Heart right ventricle (tissue), 16 donors: ENCODE measurements at regions of chr3 and their contacts with region 1.

Region 1: GRCh38 chr3:114152519-114153151 is 26.2 kb downstream of the DRD3 start:
- DNase-seq: peak; percentile 82 to 83
- ATAC-seq: peak; percentile 90 to 96 (median 95)
- H3K4me3 ChIP-seq: peak overlapping the region; percentile 3 to 63 (median 46)
- H3K27ac ChIP-seq: peak overlapping the region in 3 of 10 donors; percentile 3 to 66 (median 7)
- H3K4me1 ChIP-seq: peaks cover 0 to 13% (median 6%) of the 10 kb centered on the region in 9 donors
- H3K27me3 ChIP-seq: no peaks in the 10 kb centered on the region
- CTCF ChIP-seq: peak; percentile 81 to 98 (median 91)

Region 2: GRCh38 chr3:113461488-113461887 is 691.1 kb before region 1 on chr3:
- intact Hi-C with region 1: no loop called
- DNase-seq: no peak
- ATAC-seq: no peak
- H3K4me3 ChIP-seq: no peak overlapping the region
- H3K27ac ChIP-seq: no peak overlapping the region
- H3K4me1 ChIP-seq: no peaks in the 10 kb centered on the region
- H3K27me3 ChIP-seq: no peaks in the 10 kb centered on the region
- CTCF ChIP-seq: no peak

Region 3: GRCh38 chr3:113736548-113737089 is 416.0 kb before region 1 on chr3:
- intact Hi-C with region 1: loop called in 2 of 10 experiments (anchors 10 kb)
- DNase-seq: peak in 1 of 2 donors; percentile 26
- ATAC-seq: peak in 7 of 8 donors; percentile 55 to 83 (median 74)
- H3K4me3 ChIP-seq: no peak overlapping the region
- H3K27ac ChIP-seq: peak overlapping the region in 2 of 10 donors; percentile 0 to 6
- H3K4me1 ChIP-seq: peaks cover 0 to 43% (median 36%) of the 10 kb centered on the region in 9 donors
- H3K27me3 ChIP-seq: no peaks in the 10 kb centered on the region
- CTCF ChIP-seq: peak; percentile 52 to 80 (median 73)

Region 4: DNA sequence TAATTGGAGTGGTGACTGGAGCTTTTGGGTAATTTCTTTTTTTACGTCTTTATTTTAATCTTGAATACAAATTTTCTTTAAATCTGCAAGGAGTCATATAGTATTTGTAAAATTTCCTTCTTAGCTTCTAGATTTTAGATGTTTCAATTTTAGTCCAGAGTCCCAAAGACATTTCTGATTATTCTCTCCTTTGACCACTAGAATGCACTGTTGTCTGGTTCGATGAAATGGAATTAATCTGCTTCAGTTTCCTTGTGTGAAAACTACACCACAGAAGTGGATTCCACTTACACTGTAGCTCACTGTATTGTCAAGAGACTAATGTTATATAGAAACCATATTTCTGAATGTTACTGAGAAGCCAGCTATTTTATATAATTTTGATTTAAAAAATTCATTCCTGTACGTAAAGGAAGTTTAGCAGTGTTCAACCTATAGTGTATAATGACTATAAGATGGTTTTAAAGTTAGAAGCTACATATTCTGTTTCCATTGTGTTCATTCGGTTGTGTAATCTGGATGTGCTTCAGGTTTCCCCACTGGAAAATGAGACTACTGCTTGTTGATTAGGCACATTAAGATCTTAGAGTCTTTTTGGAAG is 307.9 kb before region 1 on chr3:
- intact Hi-C with region 1: loop called in 3 of 10 experiments (anchors 10 kb)
- DNase-seq: no peak
- ATAC-seq: no peak
- H3K4me3 ChIP-seq: no peak overlapping the region
- H3K27ac ChIP-seq: no peak overlapping the region
- H3K4me1 ChIP-seq: peaks cover 0 to 1% (median 0%) of the 10 kb centered on the region in 9 donors
- H3K27me3 ChIP-seq: no peaks in the 10 kb centered on the region
- CTCF ChIP-seq: peak in 7 of 9 donors; percentile 49 to 70 (median 57)

Region 5: GRCh38 chr3:114122027-114122709 is 30.5 kb before region 1 on chr3:
- intact Hi-C with region 1: no loop called
- DNase-seq: peak in 1 of 2 donors; percentile 60
- ATAC-seq: peak; percentile 79 to 97 (median 92)
- H3K4me3 ChIP-seq: no peak overlapping the region
- H3K27ac ChIP-seq: peak overlapping the region; percentile 31 to 83 (median 70)
- H3K4me1 ChIP-seq: peaks cover 0 to 34% (median 6%) of the 10 kb centered on the region in 9 donors
- H3K27me3 ChIP-seq: no peaks in the 10 kb centered on the region
- CTCF ChIP-seq: no peak

Region 6: GRCh38 chr3:114290911-114291901 is 138.6 kb after region 1 on chr3:
- intact Hi-C with region 1: loop called in 5 of 10 experiments (anchors 5 to 10 kb)
- DNase-seq: peak; percentile 34 to 61
- ATAC-seq: peak; percentile 38 to 69 (median 52)
- H3K4me3 ChIP-seq: peak overlapping the region in 1 of 10 donors; percentile 22
- H3K27ac ChIP-seq: peak overlapping the region in 1 of 10 donors; percentile 82
- H3K4me1 ChIP-seq: peaks cover 0 to 9% (median 0%) of the 10 kb centered on the region in 9 donors
- H3K27me3 ChIP-seq: no peaks in the 10 kb centered on the region
- CTCF ChIP-seq: peak; percentile 53 to 92 (median 70)

Region 7: DNA sequence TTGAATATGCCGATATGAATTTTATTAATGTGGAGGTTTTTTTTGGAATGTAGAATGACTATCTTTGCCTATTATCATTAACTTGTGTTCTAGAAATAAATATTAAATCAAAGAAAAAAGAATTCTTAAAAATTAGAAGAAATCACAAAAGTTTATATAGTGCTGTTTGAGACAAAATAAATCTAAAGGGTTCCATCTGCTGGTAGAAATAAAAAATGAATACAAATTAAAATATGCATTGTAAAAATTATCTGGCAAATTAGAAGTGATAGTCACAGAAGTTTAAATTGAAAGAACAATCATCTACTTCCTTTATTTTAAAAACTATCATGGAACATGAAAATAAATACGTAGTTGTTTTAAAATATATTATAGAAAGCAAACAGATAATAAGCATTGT is 1017.2 kb after region 1 on chr3:
- intact Hi-C with region 1: loop called in 1 of 10 experiments (anchors 10 kb)
- DNase-seq: no peak
- ATAC-seq: no peak
- H3K4me3 ChIP-seq: no peak overlapping the region
- H3K27ac ChIP-seq: no peak overlapping the region
- H3K4me1 ChIP-seq: no peaks in the 10 kb centered on the region
- H3K27me3 ChIP-seq: no peaks in the 10 kb centered on the region
- CTCF ChIP-seq: peak in 8 of 9 donors; percentile 34 to 66 (median 49)

Region 8: DNA sequence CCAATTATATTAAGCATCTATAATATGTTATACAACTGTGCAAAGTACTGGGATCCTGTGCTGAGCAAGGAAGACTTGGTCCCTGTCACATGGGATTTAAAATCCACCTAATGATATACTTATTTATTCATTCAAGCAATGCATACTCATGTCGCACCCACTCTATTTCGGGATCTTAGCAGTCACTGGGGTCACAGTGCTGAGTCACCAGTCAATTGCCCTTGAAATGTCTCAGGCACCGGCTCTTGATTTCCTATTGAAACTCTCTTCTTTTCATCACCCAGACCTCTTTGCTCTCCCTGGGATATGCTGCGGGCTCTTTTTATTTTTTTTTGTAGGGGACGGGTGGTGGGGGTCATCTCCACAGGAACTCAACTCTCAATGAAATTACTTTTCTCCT is 1276.2 kb after region 1 on chr3:
- intact Hi-C with region 1: no loop called
- DNase-seq: no peak
- ATAC-seq: peak in 2 of 8 donors; percentile 42 to 80
- H3K4me3 ChIP-seq: no peak overlapping the region
- H3K27ac ChIP-seq: no peak overlapping the region
- H3K4me1 ChIP-seq: peaks cover 0 to 15% (median 0%) of the 10 kb centered on the region in 9 donors
- H3K27me3 ChIP-seq: no peaks in the 10 kb centered on the region
- CTCF ChIP-seq: no peak